RWPE1 (cell line): ENCODE measurements at regions of chr12 and their contacts with region 1.

Region 1: GRCh38 chr12:25364529-25365339 is 114.0 kb upstream of the KRAS start:
- DNase-seq: no peak
- H3K27ac ChIP-seq: no peak overlapping the region
- CTCF ChIP-seq: no peak

Region 2: GRCh38 chr12:25546318-25546717 is 181.6 kb after region 1 on chr12:
- CTCF ChIA-PET with region 1: interaction called, 13 read pairs
- POLR2A ChIA-PET with region 1: no interaction called
- DNase-seq: no peak
- H3K27ac ChIP-seq: no peak overlapping the region
- CTCF ChIP-seq: no peak